Panc1 (cell line): ENCODE measurements at regions of chr19 and their contacts with region 1.

Region 1: DNA sequence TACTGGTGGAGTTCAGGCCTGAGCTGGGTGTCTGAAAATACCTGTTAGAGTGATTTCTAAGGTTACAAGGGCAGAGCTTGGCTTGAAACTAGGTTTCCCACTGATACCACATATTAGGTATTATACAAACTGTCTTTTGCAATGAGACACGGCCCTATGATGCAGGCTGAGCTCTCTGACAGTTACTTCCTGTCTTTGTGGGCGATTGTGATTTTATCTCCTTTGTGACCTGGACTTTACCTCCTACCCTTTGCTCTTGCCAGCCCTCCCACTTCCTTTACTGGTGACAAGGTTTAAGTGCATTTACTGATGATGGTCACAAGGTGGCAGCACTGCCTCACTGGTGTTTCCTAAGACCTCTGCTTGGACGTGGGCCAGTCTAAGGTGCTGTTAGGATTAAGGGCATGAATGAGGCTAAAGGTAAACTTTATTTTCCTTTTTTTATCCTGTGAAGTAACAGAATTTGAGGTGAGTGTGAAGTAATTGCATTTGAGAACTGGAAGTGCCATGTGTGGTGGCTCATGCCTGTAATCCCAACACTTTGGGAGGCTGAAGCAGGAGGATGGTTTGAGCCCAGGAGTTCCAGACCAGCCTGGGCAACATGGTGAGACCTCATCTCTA is 7.7 kb upstream of the CXCL17 start:
- DNase-seq: no peak
- ATAC-seq: peak; percentile 83
- H3K4me3 ChIP-seq: no peak overlapping the region
- H3K27ac ChIP-seq: no peak overlapping the region
- H3K4me1 ChIP-seq: no peaks in the 10 kb centered on the region
- H3K27me3 ChIP-seq: no peaks in the 10 kb centered on the region
- CTCF ChIP-seq: peak; percentile 85

Region 2: GRCh38 chr19:42521346-42522030 is 71.1 kb after region 1 on chr19:
- CTCF ChIA-PET with region 1: no interaction called
- POLR2A ChIA-PET with region 1: interaction called, 14 read pairs
- in situ Hi-C with region 1: no loop called
- intact Hi-C with region 1: no loop called
- DNase-seq: no peak
- ATAC-seq: no peak
- H3K4me3 ChIP-seq: no peak overlapping the region
- H3K27ac ChIP-seq: no peak overlapping the region
- H3K4me1 ChIP-seq: no peaks in the 10 kb centered on the region
- H3K27me3 ChIP-seq: no peaks in the 10 kb centered on the region
- CTCF ChIP-seq: no peak

Region 3: DNA sequence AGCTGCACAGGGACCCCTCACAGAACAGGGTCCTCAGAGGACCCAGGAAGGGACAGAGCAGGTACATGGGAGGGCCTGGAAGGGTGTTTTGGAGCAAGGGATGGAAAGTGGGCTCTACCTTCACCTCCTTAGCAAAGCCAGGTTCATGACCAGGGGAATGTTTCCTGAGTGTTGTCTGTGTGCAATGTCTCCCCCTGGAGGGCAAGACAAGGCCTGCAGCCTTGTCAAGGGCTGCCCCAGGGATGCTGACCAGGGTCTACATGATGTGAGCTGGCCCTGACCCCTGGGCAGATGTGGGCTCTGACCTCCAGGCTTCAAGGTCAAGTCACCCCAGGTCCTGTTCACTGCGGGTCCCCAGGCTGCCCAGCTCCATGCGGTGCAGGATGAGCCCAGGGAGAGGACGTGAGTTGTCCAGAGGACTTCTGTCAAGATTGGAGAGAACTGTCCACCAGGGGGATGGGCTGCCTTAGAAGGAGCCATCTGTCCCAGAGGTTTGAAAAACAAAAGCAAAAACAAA is 78.9 kb after region 1 on chr19:
- CTCF ChIA-PET with region 1: interaction called, 3 read pairs
- POLR2A ChIA-PET with region 1: no interaction called
- in situ Hi-C with region 1: no loop called
- intact Hi-C with region 1: loop called (anchors 2 kb)
- DNase-seq: peak; percentile 57
- ATAC-seq: peak; percentile 89
- H3K4me3 ChIP-seq: no peak overlapping the region
- H3K27ac ChIP-seq: no peak overlapping the region
- H3K4me1 ChIP-seq: no peaks in the 10 kb centered on the region
- H3K27me3 ChIP-seq: no peaks in the 10 kb centered on the region
- CTCF ChIP-seq: peak; percentile 86

Region 4: DNA sequence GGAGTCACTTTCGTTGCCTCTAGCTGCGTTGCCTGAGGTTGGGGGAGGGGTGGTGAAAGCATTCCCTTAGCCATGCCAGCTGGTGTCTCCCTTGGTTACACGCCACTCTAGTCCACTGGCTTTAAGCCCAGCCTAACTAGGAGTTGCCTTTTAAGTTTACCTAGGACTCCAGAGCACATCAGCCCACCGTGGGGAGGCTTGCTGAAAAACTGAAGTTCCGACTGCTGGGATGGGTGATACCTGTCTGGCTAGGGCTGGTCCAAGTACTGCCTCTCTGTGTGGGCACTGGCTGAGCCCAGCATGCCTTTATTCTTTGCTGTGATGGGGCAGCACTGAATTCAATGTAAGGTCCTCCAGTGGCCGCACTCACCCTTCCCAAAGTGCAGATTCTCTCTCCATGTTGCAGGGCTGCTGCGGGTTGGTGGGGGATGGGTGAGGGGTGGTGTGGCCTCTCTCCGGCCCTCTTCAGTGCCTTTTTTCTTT is 89.7 kb after region 1 on chr19:
- CTCF ChIA-PET with region 1: interaction called, 3 read pairs
- POLR2A ChIA-PET with region 1: no interaction called
- in situ Hi-C with region 1: no loop called
- intact Hi-C with region 1: loop called (anchors 5 kb)
- DNase-seq: no peak
- ATAC-seq: no peak
- H3K4me3 ChIP-seq: no peak overlapping the region
- H3K27ac ChIP-seq: no peak overlapping the region
- H3K4me1 ChIP-seq: no peaks in the 10 kb centered on the region
- H3K27me3 ChIP-seq: no peaks in the 10 kb centered on the region
- CTCF ChIP-seq: no peak